Heart left ventricle (tissue), 16 donors: ENCODE measurements at regions of chr2 and their contacts with region 1.

Region 1: GRCh38 chr2:38336619-38337018 is 40.5 kb downstream of the ATL2 start:
- DNase-seq: no peak
- ATAC-seq: no peak
- H3K4me3 ChIP-seq: no peak overlapping the region
- H3K27ac ChIP-seq: no peak overlapping the region
- H3K4me1 ChIP-seq: no peaks in the 10 kb centered on the region
- H3K27me3 ChIP-seq: no peaks in the 10 kb centered on the region
- CTCF ChIP-seq: no peak
- POLR2A ChIP-seq: no peak

Region 2: DNA sequence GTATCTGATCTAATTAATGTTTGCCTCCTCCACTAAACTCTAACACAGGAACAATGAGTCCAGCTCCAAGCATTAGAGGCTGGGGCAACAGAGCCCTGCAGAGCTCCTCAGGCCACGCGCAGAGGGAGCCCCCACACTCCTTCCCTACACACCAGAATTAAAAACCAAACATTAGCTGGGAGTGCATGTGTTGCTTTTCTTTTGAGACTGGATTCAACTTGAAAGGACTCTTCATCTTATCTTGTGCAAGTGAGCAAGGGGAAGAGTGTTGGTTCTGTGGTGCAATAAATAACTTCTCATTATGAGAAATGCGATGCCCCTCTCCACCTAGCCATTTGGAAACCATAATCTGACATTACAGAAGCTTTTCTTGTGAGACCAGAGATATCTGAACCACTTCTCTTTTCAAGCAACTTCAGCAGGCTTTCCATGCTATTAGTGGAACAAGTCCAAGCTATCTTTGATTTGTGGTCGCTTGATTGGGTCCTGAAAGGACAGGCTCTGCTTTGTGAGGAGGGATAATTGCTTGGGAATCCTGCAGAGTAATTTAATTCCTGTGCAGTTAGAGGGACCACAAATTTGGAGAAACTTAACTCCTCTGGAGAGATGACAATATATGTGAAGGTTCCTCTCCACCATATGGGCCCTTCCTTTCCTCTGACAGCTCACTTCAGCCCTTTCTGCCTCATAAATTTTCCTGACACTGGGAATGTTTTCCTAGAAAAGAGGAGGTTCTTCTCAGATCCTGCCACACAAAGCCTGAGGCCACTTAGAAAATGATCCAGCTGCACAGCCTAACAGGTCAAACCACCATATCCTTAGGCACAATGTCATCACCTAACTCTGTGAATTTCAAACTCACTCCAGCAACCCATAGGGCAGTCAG is 72.0 kb before region 1 on chr2:
- intact Hi-C with region 1: no loop called
- DNase-seq: no peak
- ATAC-seq: no peak
- H3K4me3 ChIP-seq: no peak overlapping the region
- H3K27ac ChIP-seq: peak overlapping the region in 6 of 12 donors; percentile 47 to 84 (median 56)
- H3K4me1 ChIP-seq: peaks cover 0 to 32% (median 0%) of the 10 kb centered on the region in 12 donors
- H3K27me3 ChIP-seq: no peaks in the 10 kb centered on the region
- CTCF ChIP-seq: no peak
- POLR2A ChIP-seq: no peak

Region 3: GRCh38 chr2:38465789-38466127 is 129.1 kb after region 1 on chr2:
- intact Hi-C with region 1: loop called in 1 of 10 experiments (anchors 5 kb)
- DNase-seq: peak in 1 of 5 donors; percentile 37
- ATAC-seq: peak in 3 of 4 donors; percentile 65 to 69 (median 68)
- H3K4me3 ChIP-seq: no peak overlapping the region
- H3K27ac ChIP-seq: peak overlapping the region in 1 of 12 donors; percentile 85
- H3K4me1 ChIP-seq: peaks cover 0 to 5% (median 0%) of the 10 kb centered on the region in 12 donors
- H3K27me3 ChIP-seq: no peaks in the 10 kb centered on the region
- CTCF ChIP-seq: peak in 11 of 12 donors; percentile 15 to 54 (median 43)
- POLR2A ChIP-seq: no peak

Region 4: DNA sequence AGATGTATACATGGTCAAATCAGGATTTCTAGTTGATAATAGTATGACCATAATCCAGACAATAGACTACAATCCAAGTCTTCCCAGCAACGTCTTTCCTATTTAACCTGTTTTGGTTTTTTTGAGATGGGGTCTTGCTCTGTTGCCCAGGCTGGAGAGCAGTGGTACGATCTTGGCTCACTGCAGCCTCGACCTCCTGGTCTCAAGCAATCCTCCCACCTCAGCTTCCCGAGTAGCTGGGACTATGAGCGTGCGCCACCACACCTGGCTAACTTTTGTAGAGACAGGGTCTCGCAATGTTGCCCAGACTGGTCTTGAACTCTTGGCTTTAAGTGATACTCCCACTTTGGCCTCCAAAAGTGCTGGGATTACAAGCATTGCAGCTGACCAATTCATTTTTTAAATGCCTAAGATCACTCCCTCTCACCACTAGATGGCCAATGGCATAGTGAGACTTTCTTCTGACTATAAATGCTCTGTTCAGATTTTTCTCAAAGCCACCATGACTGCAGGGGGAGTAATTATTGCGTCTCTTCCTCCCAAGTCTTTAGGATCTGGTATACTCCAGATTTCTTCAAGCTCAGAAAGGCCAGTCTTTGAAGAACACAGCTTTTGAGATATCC is 218.5 kb after region 1 on chr2:
- intact Hi-C with region 1: no loop called
- DNase-seq: no peak
- ATAC-seq: no peak
- H3K4me3 ChIP-seq: no peak overlapping the region
- H3K27ac ChIP-seq: no peak overlapping the region
- H3K4me1 ChIP-seq: peaks cover 0 to 5% (median 0%) of the 10 kb centered on the region in 12 donors
- H3K27me3 ChIP-seq: no peaks in the 10 kb centered on the region
- CTCF ChIP-seq: peak in 5 of 12 donors; percentile 9 to 37 (median 23)
- POLR2A ChIP-seq: no peak